Heart left ventricle (tissue), 16 donors: ENCODE measurements at regions of chr6 and their contacts with region 1.

Region 1: GRCh38 chr6:130945401-130945919 is 117.6 kb downstream of the EPB41L2 start:
- DNase-seq: no peak
- ATAC-seq: peak in 2 of 4 donors; percentile 26 to 37
- H3K4me3 ChIP-seq: no peak overlapping the region
- H3K27ac ChIP-seq: peak overlapping the region in 4 of 12 donors; percentile 2 to 52 (median 10)
- H3K4me1 ChIP-seq: peaks cover 0 to 36% (median 19%) of the 10 kb centered on the region in 12 donors
- H3K27me3 ChIP-seq: no peaks in the 10 kb centered on the region
- CTCF ChIP-seq: no peak
- POLR2A ChIP-seq: no peak

Region 2: GRCh38 chr6:130929036-130929678 is 16.3 kb before region 1 on chr6:
- intact Hi-C with region 1: no loop called
- DNase-seq: no peak
- ATAC-seq: peak in 3 of 4 donors; percentile 36 to 79 (median 52)
- H3K4me3 ChIP-seq: peak overlapping the region in 1 of 12 donors; percentile 16
- H3K27ac ChIP-seq: peak overlapping the region in 3 of 12 donors; percentile 3 to 69 (median 31)
- H3K4me1 ChIP-seq: peaks cover 0 to 44% (median 9%) of the 10 kb centered on the region in 12 donors
- H3K27me3 ChIP-seq: no peaks in the 10 kb centered on the region
- CTCF ChIP-seq: no peak
- POLR2A ChIP-seq: no peak

Region 3: GRCh38 chr6:130961148-130961547 is 15.7 kb after region 1 on chr6:
- intact Hi-C with region 1: loop called in 2 of 10 experiments (anchors 2 kb)
- DNase-seq: no peak
- ATAC-seq: no peak
- H3K4me3 ChIP-seq: no peak overlapping the region
- H3K27ac ChIP-seq: no peak overlapping the region
- H3K4me1 ChIP-seq: peaks cover 0 to 41% (median 20%) of the 10 kb centered on the region in 12 donors
- H3K27me3 ChIP-seq: no peaks in the 10 kb centered on the region
- CTCF ChIP-seq: no peak
- POLR2A ChIP-seq: no peak

Region 4: GRCh38 chr6:130969791-130970491 is 24.5 kb after region 1 on chr6:
- intact Hi-C with region 1: loop called in 1 of 10 experiments (anchors 2 kb)
- DNase-seq: peak in 4 of 5 donors; percentile 53 to 73 (median 64)
- ATAC-seq: peak; percentile 70 to 88 (median 81)
- H3K4me3 ChIP-seq: peak overlapping the region; percentile 14 to 69 (median 52)
- H3K27ac ChIP-seq: peak overlapping the region; percentile 33 to 85 (median 76)
- H3K4me1 ChIP-seq: peaks cover 0 to 49% (median 30%) of the 10 kb centered on the region in 12 donors
- H3K27me3 ChIP-seq: no peaks in the 10 kb centered on the region
- CTCF ChIP-seq: no peak
- POLR2A ChIP-seq: no peak

Region 5: GRCh38 chr6:131029626-131030297 is 84.3 kb after region 1 on chr6:
- intact Hi-C with region 1: no loop called
- DNase-seq: peak in 2 of 5 donors; percentile 38 to 52
- ATAC-seq: peak; percentile 65 to 81 (median 73)
- H3K4me3 ChIP-seq: no peak overlapping the region
- H3K27ac ChIP-seq: peak overlapping the region in 7 of 12 donors; percentile 1 to 49 (median 41)
- H3K4me1 ChIP-seq: peaks cover 0 to 27% (median 13%) of the 10 kb centered on the region in 12 donors
- H3K27me3 ChIP-seq: no peaks in the 10 kb centered on the region
- CTCF ChIP-seq: no peak
- POLR2A ChIP-seq: no peak